Endothelial cell of umbilical vein (primary cell): ENCODE measurements at regions of chr5 and their contacts with region 1.

Region 1: GRCh38 chr5:120803282-120803681 is 339.2 kb downstream of the PRR16 start:
- DNase-seq: peak; percentile 15
- H3K4me3 ChIP-seq: no peak overlapping the region
- H3K27ac ChIP-seq: no peak overlapping the region
- H3K4me1 ChIP-seq: no peaks in the 10 kb centered on the region
- H3K27me3 ChIP-seq: no peaks in the 10 kb centered on the region
- CTCF ChIP-seq: no peak
- POLR2A ChIP-seq: no peak

Region 2: GRCh38 chr5:119470851-119471451 is 1332.3 kb before region 1 on chr5:
- CTCF ChIA-PET with region 1: interaction called, 65 read pairs
- POLR2A ChIA-PET with region 1: no interaction called
- dilution Hi-C with region 1: no loop called
- intact Hi-C with region 1: loop called (anchors 1 kb)
- DNase-seq: peak; percentile 60
- H3K4me3 ChIP-seq: no peak overlapping the region
- H3K27ac ChIP-seq: no peak overlapping the region
- H3K4me1 ChIP-seq: peaks cover 2% of the 10 kb centered on the region
- H3K27me3 ChIP-seq: no peaks in the 10 kb centered on the region
- CTCF ChIP-seq: peak; percentile 55 to 57
- POLR2A ChIP-seq: no peak

Region 3: DNA sequence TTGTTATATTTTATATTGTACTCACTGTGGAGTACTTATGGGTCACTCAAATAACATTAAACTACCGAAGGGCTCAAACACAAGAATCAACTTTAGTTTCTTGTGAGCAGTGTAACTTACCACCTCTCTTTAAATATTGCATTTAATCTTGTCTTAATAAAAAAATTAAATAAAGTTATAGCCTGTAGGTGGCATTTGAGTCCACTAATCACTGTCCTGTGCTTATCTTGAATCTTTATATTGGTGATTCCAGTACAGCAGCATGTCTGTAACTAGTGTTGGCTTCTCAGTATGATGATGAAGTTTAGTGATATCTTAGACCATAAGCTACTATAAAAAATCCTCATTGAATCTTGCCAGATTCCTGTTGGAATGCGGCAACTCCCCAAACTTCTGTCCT is 860.1 kb before region 1 on chr5:
- CTCF ChIA-PET with region 1: interaction called, 4 read pairs
- POLR2A ChIA-PET with region 1: no interaction called
- dilution Hi-C with region 1: no loop called
- intact Hi-C with region 1: loop called (anchors 1 kb)
- DNase-seq: peak; percentile 11
- H3K4me3 ChIP-seq: no peak overlapping the region
- H3K27ac ChIP-seq: no peak overlapping the region
- H3K4me1 ChIP-seq: no peaks in the 10 kb centered on the region
- H3K27me3 ChIP-seq: no peaks in the 10 kb centered on the region
- CTCF ChIP-seq: no peak
- POLR2A ChIP-seq: no peak

Region 4: DNA sequence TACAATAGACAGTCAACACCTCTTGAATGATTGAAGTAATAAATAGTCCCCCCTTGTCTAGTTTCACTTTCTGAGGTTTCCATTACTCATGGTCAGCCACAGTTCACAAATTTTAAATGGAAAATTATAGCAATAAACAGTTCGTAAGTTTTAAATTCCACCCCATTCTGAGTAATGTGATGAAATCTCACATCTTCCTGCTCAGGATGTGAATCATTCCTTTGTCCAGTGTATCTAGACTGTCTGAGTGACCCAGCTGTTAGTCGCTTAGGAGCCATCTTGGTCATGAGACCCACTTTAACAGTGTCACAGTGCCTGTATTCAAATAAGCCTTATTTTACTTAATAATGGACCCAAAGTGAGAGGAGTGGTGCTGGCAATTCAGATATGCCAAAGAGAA is 650.8 kb before region 1 on chr5:
- CTCF ChIA-PET with region 1: no interaction called
- POLR2A ChIA-PET with region 1: no interaction called
- dilution Hi-C with region 1: no loop called
- intact Hi-C with region 1: loop called (anchors 5 kb)
- DNase-seq: peak; percentile 91
- H3K4me3 ChIP-seq: no peak overlapping the region
- H3K27ac ChIP-seq: peak overlapping the region; percentile 88
- H3K4me1 ChIP-seq: peaks cover 10% of the 10 kb centered on the region
- H3K27me3 ChIP-seq: no peaks in the 10 kb centered on the region
- CTCF ChIP-seq: no peak
- POLR2A ChIP-seq: no peak

Region 5: DNA sequence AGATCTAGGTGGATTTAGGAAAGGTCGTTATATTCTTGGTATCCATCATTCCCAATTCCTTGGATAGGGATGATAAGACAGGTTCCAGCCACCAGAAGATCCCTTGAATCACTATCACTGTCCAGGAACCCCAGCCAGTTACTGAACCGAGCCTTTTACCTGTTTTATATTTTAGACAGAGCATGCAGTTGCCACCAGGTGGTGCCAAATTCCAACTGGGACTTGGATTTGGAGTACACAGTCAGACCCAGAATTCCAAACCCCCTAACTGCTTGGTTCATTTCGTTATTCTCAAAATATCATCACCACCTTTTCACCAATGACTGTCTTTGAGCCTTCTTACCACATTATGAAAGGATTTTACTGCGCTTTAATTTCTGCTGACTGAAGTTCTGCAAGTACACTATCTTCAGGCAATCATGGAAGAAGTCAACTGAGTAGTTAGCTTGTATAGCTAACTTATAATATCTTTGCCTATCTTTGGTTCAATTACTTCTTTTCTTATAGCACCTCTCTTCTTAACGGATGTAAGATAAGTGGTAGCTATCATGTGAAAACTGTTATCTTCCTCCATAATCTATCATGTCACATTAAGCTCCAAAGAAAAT is 147.3 kb before region 1 on chr5:
- CTCF ChIA-PET with region 1: interaction called, 24 read pairs
- POLR2A ChIA-PET with region 1: no interaction called
- dilution Hi-C with region 1: no loop called
- intact Hi-C with region 1: loop called (anchors 2 kb)
- DNase-seq: peak; percentile 19
- H3K4me3 ChIP-seq: no peak overlapping the region
- H3K27ac ChIP-seq: no peak overlapping the region
- H3K4me1 ChIP-seq: no peaks in the 10 kb centered on the region
- H3K27me3 ChIP-seq: no peaks in the 10 kb centered on the region
- CTCF ChIP-seq: peak; percentile 36 to 57
- POLR2A ChIP-seq: no peak

Region 6: DNA sequence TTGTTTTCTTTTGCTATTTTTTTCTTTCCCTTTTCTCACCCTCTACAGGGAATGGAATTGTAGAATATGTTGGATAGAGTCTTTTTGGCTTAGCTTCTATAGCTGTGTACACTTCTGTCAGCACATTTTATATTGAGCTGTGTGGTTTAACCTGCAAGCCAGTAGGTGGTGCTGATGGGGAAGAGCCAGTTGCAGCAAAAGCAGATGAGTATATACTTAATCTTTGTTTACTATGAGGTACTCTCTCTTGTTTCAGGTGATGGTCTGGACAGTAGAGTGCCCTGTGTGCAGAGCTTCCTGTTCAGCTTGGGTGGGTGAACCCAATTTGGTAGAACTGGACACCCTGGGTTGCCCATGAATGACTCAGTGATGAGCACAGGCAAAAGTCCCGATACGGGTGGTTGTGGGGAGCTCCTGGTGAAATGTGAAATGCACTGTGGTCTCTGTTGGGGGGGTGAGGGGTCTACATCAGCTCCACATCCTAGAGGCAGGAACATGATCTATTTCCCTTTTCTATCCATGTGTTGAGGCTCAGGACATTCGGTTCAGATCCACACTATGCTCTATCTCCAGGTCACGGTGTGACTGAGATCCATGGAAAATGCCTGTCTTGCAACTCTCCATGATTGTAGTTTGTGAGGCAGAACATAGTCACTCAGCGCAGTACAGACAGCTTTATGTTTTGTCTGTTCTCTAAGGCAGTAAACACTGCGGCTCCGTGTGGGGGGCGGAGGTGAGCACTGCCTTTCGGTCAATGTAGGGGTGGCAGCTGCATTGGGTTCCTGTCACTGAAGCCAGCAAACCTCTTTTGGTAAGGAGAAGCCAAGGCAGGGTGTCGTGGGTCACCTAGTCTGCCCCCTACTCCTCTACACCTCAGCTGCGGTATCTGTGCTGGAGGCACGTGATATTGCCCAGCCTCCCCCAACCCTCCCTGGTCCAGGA is 14.0 kb after region 1 on chr5:
- CTCF ChIA-PET with region 1: interaction called, 19 read pairs
- POLR2A ChIA-PET with region 1: no interaction called
- dilution Hi-C with region 1: no loop called
- intact Hi-C with region 1: no loop called
- DNase-seq: peak; percentile 17
- H3K4me3 ChIP-seq: no peak overlapping the region
- H3K27ac ChIP-seq: no peak overlapping the region
- H3K4me1 ChIP-seq: no peaks in the 10 kb centered on the region
- H3K27me3 ChIP-seq: no peaks in the 10 kb centered on the region
- CTCF ChIP-seq: peak; percentile 31 to 46
- POLR2A ChIP-seq: no peak